Sciatic nerve (tissue), 2 donors: ENCODE measurements at regions of chr7 and their contacts with region 1.

Region 1: GRCh38 chr7:9752033-9752432 is 1221.6 kb upstream of the PHF14 start:
- DNase-seq: no peak
- ATAC-seq: no peak

Region 2: GRCh38 chr7:9328296-9328695 is 423.7 kb before region 1 on chr7:
- intact Hi-C with region 1: loop called (anchors 5 kb)
- DNase-seq: no peak
- ATAC-seq: no peak

Region 3: DNA sequence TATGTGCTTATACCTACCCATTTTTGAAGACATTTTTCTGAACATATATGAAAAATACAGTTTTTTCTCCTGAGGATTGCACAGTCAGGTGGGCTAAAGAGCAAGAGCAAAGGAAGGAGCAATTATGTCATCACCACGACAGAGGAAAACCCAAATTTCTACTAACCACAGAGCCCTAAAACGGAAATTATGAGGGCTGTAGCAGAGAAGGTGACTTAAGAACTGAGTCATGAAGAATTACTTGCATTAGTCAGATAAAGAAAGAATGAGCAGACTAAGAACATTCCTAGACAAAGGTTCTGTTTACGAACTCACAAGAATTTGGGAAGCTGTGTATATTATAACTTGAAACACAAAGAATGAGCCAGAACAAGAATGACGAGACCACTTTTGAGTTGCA is 344.2 kb before region 1 on chr7:
- intact Hi-C with region 1: no loop called
- DNase-seq: no peak
- ATAC-seq: no peak